Naive thymus-derived CD8-positive, alpha-beta T cell (primary cell): ENCODE measurements at regions of chr16 and their contacts with region 1.

Region 1: DNA sequence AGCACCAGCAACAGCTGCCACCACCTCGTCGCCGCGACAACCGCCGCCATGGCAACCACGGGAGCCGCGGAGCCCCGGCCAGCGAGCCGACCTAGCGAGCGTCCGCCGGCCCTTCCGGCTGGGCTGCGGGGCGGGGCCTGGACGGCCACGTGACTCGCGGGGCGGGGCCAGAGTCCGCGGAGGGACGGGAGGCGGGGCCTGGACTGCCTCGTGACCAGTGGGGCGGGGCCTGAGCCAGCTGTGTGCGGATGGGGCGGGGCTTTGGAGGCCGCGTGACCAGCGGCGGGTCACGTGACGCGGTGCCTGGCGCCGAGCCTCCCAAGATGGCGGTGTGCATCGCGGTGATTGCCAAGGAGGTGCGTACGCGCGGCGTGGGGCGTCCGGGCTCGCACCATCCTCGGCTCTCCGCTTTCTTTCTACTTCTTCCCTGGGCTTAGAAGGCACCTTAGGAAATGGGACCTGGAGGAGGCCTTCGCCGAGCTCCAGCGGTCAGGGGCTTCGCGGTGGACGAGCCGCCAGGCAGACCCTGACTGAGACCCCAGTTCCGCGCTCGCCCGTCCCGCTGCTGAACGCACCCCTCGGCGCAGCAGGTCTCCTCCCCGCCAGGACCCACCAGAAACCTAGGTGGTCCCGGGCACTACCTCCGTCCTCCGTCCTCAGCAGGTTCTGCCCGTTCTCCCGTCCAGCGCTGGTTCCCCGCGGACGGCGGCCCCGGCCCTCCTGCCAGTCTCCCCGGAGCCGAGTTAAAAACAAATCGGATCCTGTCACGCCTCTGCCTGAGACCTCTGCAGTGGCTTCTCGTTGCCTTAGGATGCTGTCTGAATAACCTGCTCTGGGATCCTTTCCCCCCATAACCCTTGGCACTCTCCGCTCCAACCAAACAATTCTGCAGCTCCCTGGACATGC is at the starts of genes GALNS and TRAPPC2L:
- DNase-seq: peak; percentile 95 to 100 (median 98)
- ATAC-seq: peak; percentile 84 to 86
- H3K4me3 Mint-ChIP-seq: peak within 1 kb of the TSS; percentile 95 to 100 (median 98)
- H3K27ac Mint-ChIP-seq: peak within 1 kb of the TSS; percentile 93 to 99 (median 96)
- H3K4me1 Mint-ChIP-seq: peaks cover 23 to 48% (median 33%) of the 10 kb centered on the region in 4 donors
- H3K27me3 Mint-ChIP-seq: no peaks in the 10 kb centered on the region
- polyA plus RNA-seq, gene GALNS: 7.8 to 11.9 (median 11.8) TPM
- polyA plus RNA-seq, gene TRAPPC2L: 81.8 to 86.5 (median 82.1) TPM

Region 2: GRCh38 chr16:88691924-88692560 is 165.0 kb before region 1 on chr16:
- POLR2A ChIA-PET with region 1: no interaction called
- DNase-seq: no peak
- ATAC-seq: peak; percentile 53 to 65
- H3K4me3 Mint-ChIP-seq: peak overlapping the region; percentile 32 to 81 (median 64)
- H3K27ac Mint-ChIP-seq: peak overlapping the region in 9 of 10 donors; percentile 79 to 93 (median 88)
- H3K4me1 Mint-ChIP-seq: peaks cover 11 to 52% (median 40%) of the 10 kb centered on the region in 4 donors
- H3K27me3 Mint-ChIP-seq: no peaks in the 10 kb centered on the region

Region 3: GRCh38 chr16:88737298-88738150 is 119.6 kb before region 1 on chr16:
- POLR2A ChIA-PET with region 1: interaction called, 16 read pairs
- DNase-seq: peak; percentile 56 to 90 (median 72)
- ATAC-seq: peak; percentile 93 to 98
- H3K4me3 Mint-ChIP-seq: no peak overlapping the region
- H3K27ac Mint-ChIP-seq: no peak overlapping the region
- H3K4me1 Mint-ChIP-seq: peaks cover 0 to 3% (median under 1%) of the 10 kb centered on the region in 4 donors
- H3K27me3 Mint-ChIP-seq: no peaks in the 10 kb centered on the region

Region 4: GRCh38 chr16:88791755-88792550 is 65.1 kb before region 1 on chr16:
- POLR2A ChIA-PET with region 1: interaction called, 17 read pairs
- DNase-seq: no peak
- ATAC-seq: peak; percentile 28 to 33
- H3K4me3 Mint-ChIP-seq: peak overlapping the region in 8 of 10 donors; percentile 44 to 71 (median 56)
- H3K27ac Mint-ChIP-seq: peak overlapping the region in 9 of 10 donors; percentile 53 to 93 (median 80)
- H3K4me1 Mint-ChIP-seq: peaks cover 15 to 65% (median 56%) of the 10 kb centered on the region in 4 donors
- H3K27me3 Mint-ChIP-seq: no peaks in the 10 kb centered on the region

Region 5: DNA sequence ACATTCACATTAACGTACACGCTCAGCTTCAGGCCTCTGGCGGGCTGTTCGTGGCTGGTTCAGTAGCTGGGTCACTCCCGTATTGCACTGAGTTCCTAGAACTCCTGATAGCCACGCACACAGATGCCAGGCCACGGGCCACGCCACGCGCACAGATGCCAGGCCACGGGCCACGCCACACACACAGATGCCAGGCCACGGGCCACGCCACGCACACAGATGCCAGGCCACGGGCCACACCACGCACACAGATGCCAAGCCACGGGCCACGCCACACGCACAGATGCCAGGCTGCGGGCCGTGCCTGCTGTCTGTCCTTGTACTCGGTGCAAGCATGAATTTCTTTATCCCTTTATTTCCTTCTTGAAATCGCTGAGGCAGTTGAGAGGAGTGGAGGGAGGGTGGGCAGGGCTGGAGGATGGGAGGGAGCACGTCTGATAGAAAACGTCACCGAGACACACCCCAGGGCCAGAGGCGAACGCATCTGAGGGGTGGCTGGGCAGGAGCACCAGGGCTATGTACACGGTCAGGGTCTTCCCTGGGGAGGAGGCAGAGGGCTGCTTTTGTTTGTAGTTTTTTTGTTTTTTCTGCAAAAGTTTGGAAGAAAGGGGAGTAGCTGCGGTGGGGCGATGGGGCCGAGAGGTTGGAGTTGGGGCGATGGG is 18.0 kb after region 1 on chr16:
- POLR2A ChIA-PET with region 1: no interaction called
- DNase-seq: no peak
- ATAC-seq: no peak
- H3K4me3 Mint-ChIP-seq: no peak overlapping the region
- H3K27ac Mint-ChIP-seq: peak overlapping the region in 1 of 10 donors; percentile 67
- H3K4me1 Mint-ChIP-seq: peaks cover 0 to 10% (median 5%) of the 10 kb centered on the region in 4 donors
- H3K27me3 Mint-ChIP-seq: peaks cover 1 to 15% (median 7%) of the 10 kb centered on the region in 5 donors

Region 6: GRCh38 chr16:88941913-88942909 is 85.1 kb after region 1 on chr16:
- POLR2A ChIA-PET with region 1: no interaction called
- DNase-seq: peak; percentile 14 to 77 (median 56)
- ATAC-seq: peak; percentile 71 to 75
- H3K4me3 Mint-ChIP-seq: peak overlapping the region; percentile 2 to 77 (median 64)
- H3K27ac Mint-ChIP-seq: peak overlapping the region in 1 of 10 donors; percentile 24
- H3K4me1 Mint-ChIP-seq: peaks cover 0 to 30% (median 9%) of the 10 kb centered on the region in 4 donors
- H3K27me3 Mint-ChIP-seq: peaks cover 12 to 58% (median 23%) of the 10 kb centered on the region in 5 donors